ENCODE measurements at regions of chr1 and their contacts with region 1.

Region 1: DNA sequence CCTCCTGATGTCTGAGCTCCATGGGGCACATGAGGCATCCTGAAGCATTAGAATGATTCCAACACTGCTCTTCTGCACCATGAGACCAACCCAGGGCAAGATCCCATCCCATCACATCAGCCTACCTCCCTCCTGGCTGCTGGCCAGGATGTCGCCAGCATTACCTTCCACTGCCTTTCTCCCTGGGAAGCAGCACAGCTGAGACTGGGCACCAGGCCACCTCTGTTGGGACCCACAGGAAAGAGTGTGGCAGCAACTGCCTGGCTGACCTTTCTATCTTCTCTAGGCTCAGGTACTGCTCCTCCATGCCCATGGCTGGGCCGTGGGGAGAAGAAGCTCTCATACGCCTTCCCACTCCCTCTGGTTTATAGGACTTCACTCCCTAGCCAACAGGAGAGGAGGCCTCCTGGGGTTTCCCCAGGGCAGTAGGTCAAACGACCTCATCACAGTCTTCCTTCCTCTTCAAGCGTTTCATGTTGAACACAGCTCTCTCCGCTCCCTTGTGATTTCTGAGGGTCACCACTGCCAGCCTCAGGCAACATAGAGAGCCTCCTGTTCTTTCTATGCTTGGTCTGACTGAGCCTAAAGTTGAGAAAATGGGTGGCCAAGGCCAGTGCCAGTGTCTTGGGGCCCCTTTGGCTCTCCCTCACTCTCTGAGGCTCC is 11.1 kb upstream of the RASSF5 start:
- DNase-seq: peak in 1 of 5 donors; percentile 28
- ATAC-seq: peak in 2 of 4 donors; percentile 24
- H3K4me3 ChIP-seq: no peak overlapping the region
- H3K27ac ChIP-seq: peak overlapping the region in 2 of 12 donors; percentile 37 to 49
- H3K4me1 ChIP-seq: peaks cover 6 to 37% (median 23%) of the 10 kb centered on the region in 12 donors
- H3K27me3 ChIP-seq: no peaks in the 10 kb centered on the region
- CTCF ChIP-seq: no peak
- POLR2A ChIP-seq: no peak

Region 2: DNA sequence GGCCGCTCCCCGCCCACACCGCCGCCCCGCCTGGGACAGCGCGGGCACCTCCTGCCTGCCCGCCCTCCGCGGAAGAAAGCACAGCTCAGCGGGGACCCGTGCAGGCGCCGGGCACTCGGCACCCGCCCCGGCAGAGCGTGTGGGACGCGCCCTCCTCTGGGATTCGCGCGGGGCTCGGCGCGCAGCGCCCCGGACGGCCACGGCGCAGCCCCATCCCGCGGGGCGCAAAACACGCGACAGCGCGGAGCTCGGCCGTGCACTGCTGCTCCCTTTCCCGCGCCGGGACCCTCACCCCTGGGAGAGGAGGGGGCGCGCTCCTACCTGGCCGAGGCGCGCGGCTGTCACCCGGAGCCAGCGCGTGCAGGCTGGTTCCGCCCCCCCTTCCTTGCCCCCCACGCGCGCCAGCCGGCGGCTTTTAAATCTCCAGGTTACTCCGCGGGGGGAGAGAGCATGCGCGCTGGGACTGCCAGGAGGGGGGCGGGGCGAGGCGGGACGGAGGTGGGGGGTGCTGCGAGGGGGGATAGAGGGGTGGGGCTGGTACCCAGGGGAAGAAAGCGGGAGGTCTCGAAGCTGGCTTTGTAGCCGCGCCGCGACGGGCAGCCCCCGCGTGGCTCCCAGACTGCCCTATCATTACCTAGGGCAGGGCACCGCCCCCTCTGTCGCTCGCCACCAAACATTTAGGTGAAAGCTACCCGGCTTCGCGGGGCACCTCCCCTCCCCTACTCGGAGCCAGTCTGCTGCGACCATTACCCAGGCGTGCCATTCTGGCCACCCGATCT is 816.0 kb before region 1 on chr1 and contains the start of gene SLC45A3:
- intact Hi-C with region 1: no loop called
- DNase-seq: peak in 4 of 5 donors; percentile 36 to 69 (median 43)
- ATAC-seq: peak in 3 of 4 donors; percentile 27 to 64 (median 63)
- H3K4me3 ChIP-seq: peak within 1 kb of the TSS; percentile 54 to 83 (median 64)
- H3K27ac ChIP-seq: peak within 1 kb of the TSS; percentile 8 to 78 (median 51)
- H3K4me1 ChIP-seq: peaks cover 4 to 39% (median 26%) of the 10 kb centered on the region in 12 donors
- H3K27me3 ChIP-seq: peaks cover 0 to 6% (median 0%) of the 10 kb centered on the region in 9 donors
- CTCF ChIP-seq: no peak
- POLR2A ChIP-seq: no peak
- total RNA-seq, gene SLC45A3: 1.2 to 6.1 (median 2.6) TPM

Region 3: GRCh38 chr1:206537141-206537540 is 40.9 kb after region 1 on chr1:
- intact Hi-C with region 1: loop called in 8 of 10 experiments (anchors 5 to 10 kb)
- DNase-seq: no peak
- ATAC-seq: no peak
- H3K4me3 ChIP-seq: no peak overlapping the region
- H3K27ac ChIP-seq: no peak overlapping the region
- H3K4me1 ChIP-seq: peaks cover 0 to 18% (median 9%) of the 10 kb centered on the region in 12 donors
- H3K27me3 ChIP-seq: no peaks in the 10 kb centered on the region
- CTCF ChIP-seq: no peak
- POLR2A ChIP-seq: no peak

Region 4: GRCh38 chr1:206971029-206971655 is 474.9 kb after region 1 on chr1:
- intact Hi-C with region 1: no loop called
- DNase-seq: no peak
- ATAC-seq: peak in 1 of 4 donors; percentile 28
- H3K4me3 ChIP-seq: no peak overlapping the region
- H3K27ac ChIP-seq: no peak overlapping the region
- H3K4me1 ChIP-seq: peaks cover 0 to 45% (median 0%) of the 10 kb centered on the region in 12 donors
- H3K27me3 ChIP-seq: peaks cover 0 to 20% (median 0%) of the 10 kb centered on the region in 9 donors
- CTCF ChIP-seq: no peak
- POLR2A ChIP-seq: no peak